Heart left ventricle (tissue), 16 donors: ENCODE measurements at regions of chr2 and their contacts with region 1.

Region 1: DNA sequence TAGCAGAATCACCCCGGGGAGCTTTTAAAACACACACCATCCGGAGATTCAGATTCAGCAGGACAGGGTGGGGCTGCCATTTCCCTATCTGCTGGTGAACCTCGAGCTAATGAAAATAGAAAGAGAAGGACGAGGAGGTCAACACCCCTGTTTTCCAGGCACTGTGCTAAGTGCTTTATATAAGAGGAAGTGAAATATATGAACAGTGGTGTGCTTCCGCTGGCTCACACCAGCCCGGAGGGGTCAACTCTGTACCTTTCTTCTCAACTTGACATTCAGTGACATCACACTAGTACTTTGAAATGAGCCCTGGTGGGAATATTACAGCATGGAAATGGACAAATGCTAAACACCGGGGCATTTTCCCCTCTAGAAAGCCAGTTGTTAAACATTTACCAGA is 108.3 kb upstream of the LTBP1 start:
- DNase-seq: peak in 1 of 5 donors; percentile 25
- ATAC-seq: peak in 1 of 4 donors; percentile 21
- H3K4me3 ChIP-seq: no peak overlapping the region
- H3K27ac ChIP-seq: peak overlapping the region in 1 of 12 donors; percentile 14
- H3K4me1 ChIP-seq: peaks cover 0 to 33% (median 4%) of the 10 kb centered on the region in 12 donors
- H3K27me3 ChIP-seq: no peaks in the 10 kb centered on the region
- CTCF ChIP-seq: no peak
- POLR2A ChIP-seq: no peak

Region 2: DNA sequence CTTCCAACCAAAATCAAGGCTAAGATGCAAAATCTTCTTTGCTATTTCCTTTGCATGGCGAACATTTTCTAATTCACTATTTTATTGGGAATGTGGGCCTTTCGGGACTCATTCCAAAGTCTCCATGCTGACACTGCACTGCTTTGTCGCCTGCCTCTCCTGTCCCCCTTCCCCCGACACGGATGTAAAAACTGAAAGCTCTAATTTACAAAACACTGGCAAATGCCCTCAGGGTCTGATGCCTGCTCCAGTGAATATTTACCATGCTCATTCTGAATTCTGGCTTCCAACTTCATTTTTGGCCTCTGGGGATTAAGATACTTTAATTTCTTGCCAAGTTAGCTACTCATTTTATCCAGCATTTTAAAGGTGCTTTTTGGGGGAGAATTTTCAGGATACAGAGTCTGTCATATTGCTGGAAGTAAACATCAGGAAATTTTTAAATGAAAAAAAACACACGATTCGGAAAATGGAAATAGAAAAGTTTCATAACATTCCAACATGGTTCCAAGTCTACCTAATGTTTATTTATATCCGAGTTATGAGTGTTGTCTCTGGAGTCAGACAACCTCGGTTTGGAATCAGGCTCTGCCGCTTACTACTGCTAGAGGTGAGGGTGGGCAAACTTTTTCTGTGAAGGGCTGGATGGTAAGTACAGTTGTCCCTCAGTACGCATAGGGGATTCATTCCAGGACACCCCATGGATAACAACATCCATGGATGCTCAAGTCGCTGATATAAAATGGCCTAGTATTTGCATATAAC is 93.7 kb after region 1 on chr2:
- intact Hi-C with region 1: loop called in 1 of 10 experiments (anchors 5 kb)
- DNase-seq: no peak
- ATAC-seq: peak in 2 of 4 donors; percentile 39 to 68
- H3K4me3 ChIP-seq: no peak overlapping the region
- H3K27ac ChIP-seq: no peak overlapping the region
- H3K4me1 ChIP-seq: peaks cover 0 to 3% (median 0%) of the 10 kb centered on the region in 12 donors
- H3K27me3 ChIP-seq: no peaks in the 10 kb centered on the region
- CTCF ChIP-seq: no peak
- POLR2A ChIP-seq: no peak